ENCODE measurements at regions of chr3 and their contacts with region 1.

Region 1: GRCh38 chr3:132399054-132399929 is 18.0 kb upstream of the DNAJC13 start:
- DNase-seq: peak; percentile 44
- ATAC-seq: peak; percentile 81
- H3K4me3 Mint-ChIP-seq: no peak overlapping the region
- H3K27ac Mint-ChIP-seq: no peak overlapping the region
- H3K4me1 Mint-ChIP-seq: peaks cover 16% of the 10 kb centered on the region
- H3K27me3 Mint-ChIP-seq: no peaks in the 10 kb centered on the region
- CTCF ChIP-seq: peak; percentile 73

Region 2: GRCh38 chr3:132253262-132253878 is 145.9 kb before region 1 on chr3:
- CTCF ChIA-PET with region 1: interaction called, 72 read pairs
- POLR2A ChIA-PET with region 1: no interaction called
- DNase-seq: no peak
- ATAC-seq: peak; percentile 74
- H3K4me3 Mint-ChIP-seq: no peak overlapping the region
- H3K27ac Mint-ChIP-seq: no peak overlapping the region
- H3K4me1 Mint-ChIP-seq: peaks cover 6% of the 10 kb centered on the region
- H3K27me3 Mint-ChIP-seq: peaks cover 3% of the 10 kb centered on the region; the same call in 1 of the 2 replicates
- CTCF ChIP-seq: peak; percentile 43

Region 3: GRCh38 chr3:132268956-132269355 is 130.3 kb before region 1 on chr3:
- CTCF ChIA-PET with region 1: interaction called, 10 read pairs
- POLR2A ChIA-PET with region 1: no interaction called
- DNase-seq: peak; percentile 58
- ATAC-seq: peak; percentile 82
- H3K4me3 Mint-ChIP-seq: no peak overlapping the region
- H3K27ac Mint-ChIP-seq: no peak overlapping the region
- H3K4me1 Mint-ChIP-seq: peaks cover 20% of the 10 kb centered on the region
- H3K27me3 Mint-ChIP-seq: no peaks in the 10 kb centered on the region; the same call in 1 of the 2 replicates
- CTCF ChIP-seq: no peak

Region 4: GRCh38 chr3:132283440-132283839 is 115.9 kb before region 1 on chr3:
- CTCF ChIA-PET with region 1: interaction called, 11 read pairs
- POLR2A ChIA-PET with region 1: no interaction called
- DNase-seq: no peak
- ATAC-seq: peak; percentile 33
- H3K4me3 Mint-ChIP-seq: no peak overlapping the region
- H3K27ac Mint-ChIP-seq: peak overlapping the region; percentile 65
- H3K4me1 Mint-ChIP-seq: peaks cover 39% of the 10 kb centered on the region
- H3K27me3 Mint-ChIP-seq: no peaks in the 10 kb centered on the region
- CTCF ChIP-seq: no peak

Region 5: DNA sequence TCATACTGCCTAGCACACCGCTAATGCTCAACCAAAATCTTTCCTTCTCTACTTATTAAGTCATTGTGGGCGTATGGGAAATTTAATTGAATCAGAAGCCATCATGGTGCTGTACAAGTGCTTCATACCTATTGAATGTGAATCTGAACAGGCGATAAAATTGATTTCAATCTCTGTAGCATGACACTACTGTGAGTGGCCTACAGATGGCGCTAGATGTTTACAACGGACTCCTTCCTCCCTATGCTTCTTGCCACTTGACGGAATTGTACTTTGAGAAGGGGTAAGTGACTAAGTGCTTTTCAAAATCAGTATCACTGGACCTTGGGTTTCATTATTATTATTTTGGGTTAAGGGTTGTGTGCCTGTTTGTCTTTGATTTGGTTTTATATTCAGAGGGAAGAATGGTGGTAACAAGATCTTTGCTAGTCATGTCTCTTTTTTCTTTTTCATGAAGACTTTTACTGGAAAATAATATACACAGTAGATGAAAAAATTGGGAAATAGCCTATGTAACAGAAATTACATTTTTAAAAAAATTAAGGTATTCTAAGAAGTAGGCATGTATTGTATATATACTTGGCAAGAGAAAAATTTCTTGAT is 46.6 kb before region 1 on chr3:
- CTCF ChIA-PET with region 1: interaction called, 185 read pairs
- POLR2A ChIA-PET with region 1: no interaction called
- DNase-seq: peak; percentile 76
- ATAC-seq: peak; percentile 80
- H3K4me3 Mint-ChIP-seq: no peak overlapping the region
- H3K27ac Mint-ChIP-seq: no peak overlapping the region
- H3K4me1 Mint-ChIP-seq: peaks cover 28% of the 10 kb centered on the region
- H3K27me3 Mint-ChIP-seq: no peaks in the 10 kb centered on the region
- CTCF ChIP-seq: peak; percentile 81

Region 6: DNA sequence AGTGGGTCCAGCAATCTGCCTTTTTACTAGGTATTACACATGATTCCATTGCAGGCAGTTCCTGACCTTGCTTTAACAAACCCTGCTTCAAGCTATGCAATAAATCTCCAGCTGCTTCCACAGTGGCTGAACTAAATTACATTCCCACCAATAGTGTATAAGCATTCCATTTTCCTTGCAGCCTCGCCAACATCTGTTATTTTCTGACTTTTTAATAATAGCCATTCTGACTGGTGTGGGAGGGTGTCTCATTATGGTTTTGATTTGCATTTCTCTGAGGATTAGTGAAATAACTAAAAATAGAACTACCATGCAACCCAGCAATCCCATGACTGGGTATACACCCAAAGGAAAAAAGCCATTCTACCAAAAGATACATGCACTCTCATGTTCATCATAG is 18.4 kb before region 1 on chr3:
- CTCF ChIA-PET with region 1: interaction called, 23 read pairs
- POLR2A ChIA-PET with region 1: no interaction called
- DNase-seq: no peak
- ATAC-seq: no peak
- H3K4me3 Mint-ChIP-seq: no peak overlapping the region
- H3K27ac Mint-ChIP-seq: peak overlapping the region; percentile 100
- H3K4me1 Mint-ChIP-seq: peaks cover 65% of the 10 kb centered on the region
- H3K27me3 Mint-ChIP-seq: no peaks in the 10 kb centered on the region; the same call in 1 of the 2 replicates
- CTCF ChIP-seq: no peak

Region 7: GRCh38 chr3:132432639-132433038 is 33.3 kb after region 1 on chr3:
- CTCF ChIA-PET with region 1: no interaction called
- POLR2A ChIA-PET with region 1: no interaction called
- DNase-seq: no peak
- ATAC-seq: no peak
- H3K4me3 Mint-ChIP-seq: no peak overlapping the region
- H3K27ac Mint-ChIP-seq: no peak overlapping the region
- H3K4me1 Mint-ChIP-seq: no peaks in the 10 kb centered on the region
- H3K27me3 Mint-ChIP-seq: no peaks in the 10 kb centered on the region
- CTCF ChIP-seq: no peak

Measured in WTC11 (cell line).